ENCODE measurements at regions of chr19 and their contacts with region 1.

Region 1: DNA sequence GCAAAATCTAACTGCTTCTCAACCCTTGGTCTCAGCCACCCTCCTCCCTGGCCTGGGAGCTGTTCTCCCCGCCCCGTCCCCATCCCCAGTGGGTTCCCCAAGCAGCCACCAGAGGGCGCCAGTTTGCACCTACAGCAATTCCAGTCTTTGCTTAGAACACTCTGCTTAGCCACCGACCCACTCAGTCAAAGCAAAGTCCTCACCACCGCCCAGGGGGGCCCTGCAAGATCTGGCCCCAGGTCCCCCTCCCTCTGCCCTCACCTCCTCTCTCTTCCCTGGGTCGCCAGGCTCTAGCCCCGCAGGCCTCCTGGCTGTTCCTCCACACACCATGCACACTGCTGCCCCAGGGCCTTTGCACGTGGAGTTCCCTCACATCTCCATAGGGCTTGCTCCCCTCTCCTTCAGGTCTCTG is 12.4 kb downstream of the TMEM143 start:
- DNase-seq: peak; percentile 62 to 86 (median 78)
- ATAC-seq: peak; percentile 83
- H3K4me3 ChIP-seq: no peak overlapping the region
- H3K4me3 Mint-ChIP-seq: no peak overlapping the region
- H3K27ac ChIP-seq: no peak overlapping the region
- H3K27ac Mint-ChIP-seq: no peak overlapping the region
- H3K4me1 ChIP-seq: no peaks in the 10 kb centered on the region
- H3K4me1 Mint-ChIP-seq: peaks cover 3% of the 10 kb centered on the region
- H3K27me3 ChIP-seq: no peaks in the 10 kb centered on the region
- H3K27me3 Mint-ChIP-seq: no peaks in the 10 kb centered on the region
- CTCF ChIP-seq: peak; percentile 62

Region 2: GRCh38 chr19:48308631-48309586 is 42.4 kb before region 1 on chr19:
- CTCF ChIA-PET with region 1: interaction called, 3 read pairs
- POLR2A ChIA-PET with region 1: no interaction called
- intact Hi-C with region 1: loop called in 1 of 2 experiments (anchors 5 kb)
- DNase-seq: no peak
- ATAC-seq: no peak
- H3K4me3 ChIP-seq: no peak overlapping the region
- H3K4me3 Mint-ChIP-seq: no peak overlapping the region
- H3K27ac ChIP-seq: no peak overlapping the region
- H3K27ac Mint-ChIP-seq: no peak overlapping the region
- H3K4me1 ChIP-seq: no peaks in the 10 kb centered on the region
- H3K4me1 Mint-ChIP-seq: no peaks in the 10 kb centered on the region
- H3K27me3 ChIP-seq: no peaks in the 10 kb centered on the region
- H3K27me3 Mint-ChIP-seq: no peaks in the 10 kb centered on the region
- CTCF ChIP-seq: no peak

Region 3: GRCh38 chr19:48578891-48579290 is 227.5 kb after region 1 on chr19:
- CTCF ChIA-PET with region 1: interaction called, 4 read pairs
- POLR2A ChIA-PET with region 1: no interaction called
- intact Hi-C with region 1: loop called in 1 of 2 experiments (anchors 5 kb)
- DNase-seq: no peak
- ATAC-seq: no peak
- H3K4me3 ChIP-seq: no peak overlapping the region
- H3K4me3 Mint-ChIP-seq: no peak overlapping the region
- H3K27ac ChIP-seq: no peak overlapping the region
- H3K27ac Mint-ChIP-seq: no peak overlapping the region
- H3K4me1 ChIP-seq: no peaks in the 10 kb centered on the region
- H3K4me1 Mint-ChIP-seq: peaks cover under 1% of the 10 kb centered on the region
- H3K27me3 ChIP-seq: no peaks in the 10 kb centered on the region
- H3K27me3 Mint-ChIP-seq: peaks cover 2% of the 10 kb centered on the region
- CTCF ChIP-seq: no peak

Region 4: GRCh38 chr19:48608798-48609263 is 257.5 kb after region 1 on chr19:
- CTCF ChIA-PET with region 1: interaction called, 5 read pairs
- POLR2A ChIA-PET with region 1: no interaction called
- intact Hi-C with region 1: loop called in 1 of 2 experiments (anchors 1 kb)
- DNase-seq: peak in 8 of 9 experiments; percentile 28 to 76 (median 54)
- ATAC-seq: peak; percentile 91
- H3K4me3 ChIP-seq: no peak overlapping the region
- H3K4me3 Mint-ChIP-seq: no peak overlapping the region
- H3K27ac ChIP-seq: no peak overlapping the region
- H3K27ac Mint-ChIP-seq: no peak overlapping the region
- H3K4me1 ChIP-seq: peaks cover 6% of the 10 kb centered on the region
- H3K4me1 Mint-ChIP-seq: peaks cover 4% of the 10 kb centered on the region
- H3K27me3 ChIP-seq: no peaks in the 10 kb centered on the region
- H3K27me3 Mint-ChIP-seq: no peaks in the 10 kb centered on the region
- CTCF ChIP-seq: peak; percentile 50

Measured in CD8-positive, alpha-beta T cell (primary cell).